ENCODE measurements at regions of chr19 and their contacts with region 1.

Region 1: DNA sequence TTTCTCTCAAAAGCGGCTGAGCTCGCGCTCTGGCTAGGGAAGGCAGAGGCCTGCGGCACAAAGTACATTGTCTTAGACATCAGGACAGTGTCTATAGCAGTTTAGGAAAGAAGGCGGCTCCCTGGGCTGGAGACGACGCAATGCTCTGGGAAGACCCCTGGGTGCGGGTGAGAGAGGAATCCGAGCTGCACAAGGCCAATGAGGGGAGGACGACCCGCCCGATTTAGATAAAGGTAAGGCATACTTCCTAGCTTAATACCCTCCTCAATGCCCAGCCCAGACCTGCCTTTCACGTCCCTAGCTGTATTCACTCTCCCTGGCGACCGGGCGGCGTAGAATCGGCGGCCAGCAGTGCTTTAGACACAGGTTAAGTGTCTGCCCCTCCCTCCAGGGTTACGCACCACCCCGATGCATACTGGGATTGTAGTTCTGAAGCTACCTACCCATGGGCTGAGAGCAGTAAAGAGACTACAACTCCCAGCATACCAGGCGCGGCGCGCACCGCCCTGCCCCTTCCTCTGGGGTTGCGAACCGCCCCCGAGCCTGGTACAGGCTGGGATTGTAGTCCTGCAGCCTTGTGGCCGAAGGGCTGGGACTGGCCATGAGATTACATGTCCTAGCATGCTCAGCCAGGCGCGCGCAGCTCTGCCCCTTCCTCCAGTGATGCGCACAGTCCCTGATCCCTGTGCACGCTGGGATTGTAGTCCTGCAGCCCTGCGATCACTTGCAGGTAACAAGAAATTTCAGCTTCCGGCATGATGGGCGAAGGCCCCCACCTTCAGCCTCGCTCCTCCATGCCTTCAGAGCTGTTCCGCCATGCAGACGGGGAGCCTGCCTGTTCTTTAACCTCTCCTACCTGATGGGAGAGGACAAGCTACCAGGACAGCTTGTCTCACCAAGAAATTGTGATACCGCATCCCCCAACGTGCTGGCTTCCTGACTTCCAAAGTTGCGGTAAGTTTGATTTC is 43.4 kb upstream of the ZNF14 start:
- DNase-seq: peak; percentile 81 to 96 (median 92)
- ATAC-seq: peak; percentile 99
- H3K4me3 ChIP-seq: peak overlapping the region; percentile 60 to 81
- H3K4me3 Mint-ChIP-seq: peak overlapping the region; percentile 97
- H3K27ac ChIP-seq: peak overlapping the region; percentile 42 to 71
- H3K27ac Mint-ChIP-seq: peak overlapping the region; percentile 98
- H3K4me1 ChIP-seq: peaks cover 17% of the 10 kb centered on the region
- H3K4me1 Mint-ChIP-seq: peaks cover 65% of the 10 kb centered on the region
- H3K27me3 ChIP-seq: no peaks in the 10 kb centered on the region
- H3K27me3 Mint-ChIP-seq: no peaks in the 10 kb centered on the region
- CTCF ChIP-seq: no peak

Region 2: GRCh38 chr19:19732579-19733501 is 43.5 kb before region 1 on chr19 and contains the start of gene ZNF14:
- CTCF ChIA-PET with region 1: no interaction called
- POLR2A ChIA-PET with region 1: interaction called, 17 read pairs
- intact Hi-C with region 1: loop called (anchors 1 kb)
- DNase-seq: peak; percentile 77 to 96 (median 92)
- ATAC-seq: peak; percentile 99
- H3K4me3 ChIP-seq: peak within 1 kb of the TSS; percentile 84 to 99
- H3K4me3 Mint-ChIP-seq: peak within 1 kb of the TSS; percentile 100
- H3K27ac ChIP-seq: peak within 1 kb of the TSS; percentile 79 to 82
- H3K27ac Mint-ChIP-seq: peak within 1 kb of the TSS; percentile 93
- H3K4me1 ChIP-seq: peaks cover 13% of the 10 kb centered on the region
- H3K4me1 Mint-ChIP-seq: peaks cover 29% of the 10 kb centered on the region
- H3K27me3 ChIP-seq: no peaks in the 10 kb centered on the region
- H3K27me3 Mint-ChIP-seq: no peaks in the 10 kb centered on the region
- CTCF ChIP-seq: no peak
- total RNA-seq, gene ZNF14: 40.7 to 44.9 TPM

Region 3: DNA sequence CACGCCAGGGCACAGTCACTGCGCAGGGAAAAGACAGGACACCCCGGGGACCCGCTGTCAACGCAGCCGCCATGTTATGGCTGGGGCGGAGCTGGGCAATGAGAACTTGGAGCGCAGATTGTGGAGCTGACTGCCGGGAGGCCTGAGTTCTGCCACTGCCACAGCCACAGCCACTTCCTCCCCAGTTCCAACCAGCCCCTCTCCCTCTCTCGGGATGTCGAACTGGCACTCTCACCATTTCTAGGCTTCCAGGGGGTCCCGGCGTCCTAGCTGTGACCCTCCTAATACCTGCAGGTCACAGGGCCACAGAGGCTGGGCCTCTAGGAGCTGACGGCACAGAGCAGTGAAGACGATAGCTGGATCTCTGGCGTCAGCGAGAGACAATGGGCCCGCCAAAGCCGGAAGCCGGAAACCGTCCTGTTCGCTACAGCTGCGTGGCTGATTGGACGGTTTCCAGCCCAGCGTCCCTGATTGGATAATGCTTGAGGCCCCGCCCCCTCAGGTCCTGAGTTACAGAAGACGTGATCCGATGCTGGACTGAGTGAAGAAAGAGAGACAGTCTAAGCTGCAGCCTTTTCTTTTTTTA is 45.1 kb after region 1 on chr19 and contains the start of gene ZNF506:
- CTCF ChIA-PET with region 1: interaction called, 9 read pairs
- POLR2A ChIA-PET with region 1: interaction called, 30 read pairs
- intact Hi-C with region 1: loop called (anchors 1 kb)
- DNase-seq: peak; percentile 95 to 99 (median 97)
- ATAC-seq: peak; percentile 82
- H3K4me3 ChIP-seq: peak within 1 kb of the TSS; percentile 91 to 97
- H3K4me3 Mint-ChIP-seq: peak within 1 kb of the TSS; percentile 100
- H3K27ac ChIP-seq: peak within 1 kb of the TSS; percentile 96 to 98
- H3K27ac Mint-ChIP-seq: peak within 1 kb of the TSS; percentile 100
- H3K4me1 ChIP-seq: peaks cover 33% of the 10 kb centered on the region
- H3K4me1 Mint-ChIP-seq: peaks cover 38% of the 10 kb centered on the region
- H3K27me3 ChIP-seq: no peaks in the 10 kb centered on the region
- H3K27me3 Mint-ChIP-seq: no peaks in the 10 kb centered on the region
- CTCF ChIP-seq: no peak
- total RNA-seq, gene ZNF506: 50.2 to 50.4 TPM

Region 4: DNA sequence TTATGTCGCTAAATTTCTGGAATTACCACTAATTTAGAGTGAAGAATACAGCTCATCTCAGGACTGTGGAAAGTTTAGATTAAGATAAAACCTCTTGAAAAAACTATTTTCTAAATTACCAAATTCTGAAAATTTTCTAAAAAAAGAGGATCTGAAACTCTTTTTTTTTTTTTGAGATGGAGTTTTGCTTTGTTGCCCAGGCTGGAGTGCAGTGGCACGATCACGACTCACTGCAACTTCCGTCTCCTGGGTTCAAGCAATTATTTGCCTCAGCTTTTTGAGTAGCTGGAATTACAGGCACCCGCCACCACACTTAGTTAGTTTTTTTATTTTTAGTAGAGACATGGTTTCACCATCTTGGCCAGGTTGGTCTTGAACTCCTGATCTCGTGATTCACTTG is 72.7 kb after region 1 on chr19:
- CTCF ChIA-PET with region 1: no interaction called
- POLR2A ChIA-PET with region 1: no interaction called
- intact Hi-C with region 1: no loop called
- DNase-seq: no peak
- ATAC-seq: no peak
- H3K4me3 ChIP-seq: no peak overlapping the region
- H3K4me3 Mint-ChIP-seq: no peak overlapping the region
- H3K27ac ChIP-seq: no peak overlapping the region
- H3K27ac Mint-ChIP-seq: no peak overlapping the region
- H3K4me1 ChIP-seq: no peaks in the 10 kb centered on the region
- H3K4me1 Mint-ChIP-seq: no peaks in the 10 kb centered on the region
- H3K27me3 ChIP-seq: no peaks in the 10 kb centered on the region
- H3K27me3 Mint-ChIP-seq: no peaks in the 10 kb centered on the region
- CTCF ChIP-seq: no peak

Region 5: GRCh38 chr19:19900729-19901444 is 124.6 kb after region 1 on chr19 and contains the start of gene ZNF93:
- CTCF ChIA-PET with region 1: no interaction called
- POLR2A ChIA-PET with region 1: interaction called, 15 read pairs
- intact Hi-C with region 1: loop called (anchors 1 kb)
- DNase-seq: peak; percentile 83 to 95 (median 91)
- ATAC-seq: peak; percentile 97
- H3K4me3 ChIP-seq: peak within 1 kb of the TSS; percentile 86 to 95
- H3K4me3 Mint-ChIP-seq: peak within 1 kb of the TSS; percentile 94
- H3K27ac ChIP-seq: peak within 1 kb of the TSS; percentile 46 to 75
- H3K27ac Mint-ChIP-seq: peak within 1 kb of the TSS; percentile 91
- H3K4me1 ChIP-seq: peaks cover 10% of the 10 kb centered on the region
- H3K4me1 Mint-ChIP-seq: peaks cover 38% of the 10 kb centered on the region
- H3K27me3 ChIP-seq: no peaks in the 10 kb centered on the region
- H3K27me3 Mint-ChIP-seq: no peaks in the 10 kb centered on the region
- CTCF ChIP-seq: no peak
- total RNA-seq, gene ZNF93: 5.9 to 6.8 TPM

Region 6: GRCh38 chr19:21396893-21397572 is 1620.7 kb after region 1 on chr19 and contains the start of gene ZNF493:
- CTCF ChIA-PET with region 1: no interaction called
- POLR2A ChIA-PET with region 1: no interaction called
- intact Hi-C with region 1: loop called in 1 of 2 experiments (anchors 2 kb)
- DNase-seq: peak; percentile 82 to 96 (median 92)
- ATAC-seq: peak; percentile 99
- H3K4me3 ChIP-seq: peak within 1 kb of the TSS; percentile 73 to 95
- H3K4me3 Mint-ChIP-seq: peak within 1 kb of the TSS; percentile 97
- H3K27ac ChIP-seq: peak within 1 kb of the TSS; percentile 72 to 76
- H3K27ac Mint-ChIP-seq: peak within 1 kb of the TSS; percentile 94
- H3K4me1 ChIP-seq: peaks cover 15% of the 10 kb centered on the region
- H3K4me1 Mint-ChIP-seq: peaks cover 38% of the 10 kb centered on the region
- H3K27me3 ChIP-seq: no peaks in the 10 kb centered on the region
- H3K27me3 Mint-ChIP-seq: no peaks in the 10 kb centered on the region
- CTCF ChIP-seq: no peak
- total RNA-seq, gene ZNF493: 44.6 to 46.1 TPM